Right ventricle myocardium inferior (tissue), 1 donor: ENCODE measurements at regions of chr17 and their contacts with region 1.

Region 1: GRCh38 chr17:77887464-77888241 is 70.8 kb upstream of the TNRC6C start:
- DNase-seq: peak; percentile 95
- ATAC-seq: peak; percentile 89

Region 2: GRCh38 chr17:77724876-77725615 is 162.6 kb before region 1 on chr17:
- intact Hi-C with region 1: loop called (anchors 5 kb)
- DNase-seq: no peak
- ATAC-seq: no peak